Motor neuron (in vitro differentiated cells): ENCODE measurements at regions of chr6 and their contacts with region 1.

Region 1: GRCh38 chr6:46848684-46849360 is 55.6 kb downstream of the MEP1A start:
- ATAC-seq: peak; percentile 99 to 100 (median 100)
- H3K4me3 ChIP-seq: peak overlapping the region in 1 of 5 donors; percentile 3
- H3K27ac ChIP-seq: no peak overlapping the region
- H3K4me1 ChIP-seq: peaks cover 0 to 3% of the 10 kb centered on the region in 2 donors

Region 2: DNA sequence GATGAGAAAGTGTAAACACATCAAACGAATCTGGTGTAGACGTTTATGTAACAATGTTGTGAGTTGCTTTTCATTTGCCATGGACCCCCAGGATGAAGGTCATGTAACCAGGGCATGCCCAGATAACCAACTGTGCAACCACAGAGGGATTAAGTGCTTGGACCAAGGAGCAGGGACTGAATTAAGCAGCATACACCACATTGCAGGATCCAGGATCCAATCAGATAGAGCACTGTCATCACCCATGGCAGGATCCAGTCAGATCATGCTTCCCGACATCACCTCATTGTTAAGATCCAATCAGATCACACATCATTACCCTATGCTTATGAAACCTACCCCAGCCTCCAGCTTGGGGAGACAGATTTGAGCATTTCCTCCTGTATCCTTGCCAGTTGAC is 283.3 kb before region 1 on chr6:
- in situ Hi-C with region 1: no loop called
- ATAC-seq: no peak
- H3K4me3 ChIP-seq: no peak overlapping the region
- H3K27ac ChIP-seq: no peak overlapping the region
- H3K4me1 ChIP-seq: no peaks in the 10 kb centered on the region

Region 3: DNA sequence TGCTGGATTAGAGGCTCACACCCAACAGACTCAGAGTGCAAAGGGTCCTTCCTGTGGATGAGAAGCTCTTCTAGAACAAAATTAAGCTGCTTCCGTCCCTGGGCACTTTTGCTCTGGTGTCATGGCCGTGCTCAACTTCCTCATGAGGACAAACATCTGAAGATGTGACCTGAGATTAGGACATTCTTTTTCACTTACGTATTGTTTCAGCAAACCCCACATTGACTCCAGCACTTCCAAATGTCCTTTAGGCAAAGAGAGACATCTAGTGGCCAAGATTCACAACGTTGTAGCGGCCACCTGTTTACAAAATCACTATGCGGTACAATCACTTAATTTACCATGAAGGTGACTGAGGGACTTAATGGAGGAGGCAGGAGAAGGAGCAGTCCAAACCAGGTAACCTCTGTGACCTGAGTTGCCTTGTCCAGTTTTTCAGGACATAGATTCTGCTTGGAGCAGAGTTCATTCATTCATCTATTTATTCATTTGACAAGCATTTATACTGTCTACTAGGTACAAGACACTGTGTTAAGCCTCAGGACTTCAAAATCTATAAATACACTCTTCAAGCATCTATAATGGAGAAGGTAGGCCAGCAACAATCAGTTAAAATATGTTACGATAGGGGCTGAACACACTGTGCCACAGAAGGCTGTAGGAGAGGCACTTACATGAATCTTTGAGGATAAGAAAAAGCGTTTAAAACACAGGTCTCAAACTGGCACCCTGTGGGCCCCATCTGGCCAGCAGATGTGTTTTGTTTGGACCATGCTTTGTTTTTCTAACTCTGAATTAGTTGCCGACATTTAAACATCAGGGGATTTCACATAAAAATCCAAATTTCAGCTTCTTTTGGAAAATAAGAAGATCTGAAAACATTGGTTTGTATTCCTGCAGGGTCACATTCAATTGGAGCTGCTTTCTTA is 198.9 kb after region 1 on chr6:
- in situ Hi-C with region 1: loop called in 1 of 9 experiments (anchors 25 kb)
- ATAC-seq: peak; percentile 43 to 98 (median 76)
- H3K4me3 ChIP-seq: no peak overlapping the region
- H3K27ac ChIP-seq: no peak overlapping the region
- H3K4me1 ChIP-seq: no peaks in the 10 kb centered on the region

Region 4: DNA sequence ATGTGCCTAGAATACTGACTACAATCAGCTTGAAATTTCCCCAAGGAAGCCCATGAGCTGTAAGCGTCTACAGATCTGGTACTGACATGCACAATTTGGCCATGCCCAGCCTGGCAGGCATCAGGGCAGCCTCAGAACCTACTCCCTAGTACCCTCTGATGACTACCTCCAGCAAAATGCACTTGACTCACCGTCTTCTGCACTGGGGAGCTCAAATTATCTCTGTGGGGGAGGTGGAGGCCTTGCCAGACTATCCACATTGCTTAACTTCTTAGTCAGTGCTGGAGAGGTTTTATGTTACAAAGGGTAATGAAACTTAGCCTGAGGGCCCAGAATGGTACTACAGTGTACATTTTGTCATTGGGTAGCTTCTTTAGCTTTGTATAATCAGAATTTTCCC is 319.4 kb after region 1 on chr6:
- in situ Hi-C with region 1: no loop called
- ATAC-seq: peak in 3 of 8 experiments; percentile 47 to 99 (median 97)
- H3K4me3 ChIP-seq: no peak overlapping the region
- H3K27ac ChIP-seq: no peak overlapping the region
- H3K4me1 ChIP-seq: no peaks in the 10 kb centered on the region

Region 5: DNA sequence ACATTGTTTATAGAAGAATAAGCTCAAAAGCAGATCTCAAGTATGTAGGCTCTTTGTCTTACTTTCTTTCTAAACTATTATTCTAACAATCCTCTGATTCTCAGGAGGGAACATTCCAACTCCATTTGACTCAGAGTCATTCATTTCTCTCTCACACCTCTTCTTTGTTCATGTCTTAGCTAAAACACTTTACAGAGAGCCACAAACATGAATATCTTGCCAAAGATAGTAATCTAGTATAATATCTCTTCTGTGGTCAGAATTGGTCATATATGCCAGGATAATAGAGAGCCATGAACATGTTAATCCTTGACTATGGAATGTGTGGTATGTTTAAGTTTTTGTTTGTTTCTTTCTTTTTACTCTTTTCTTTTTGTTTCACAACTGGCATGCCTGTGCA is 1718.2 kb after region 1 on chr6:
- in situ Hi-C with region 1: no loop called
- ATAC-seq: peak in 2 of 8 experiments; percentile 11 to 50
- H3K4me3 ChIP-seq: no peak overlapping the region
- H3K27ac ChIP-seq: no peak overlapping the region
- H3K4me1 ChIP-seq: peaks cover 0 to 4% of the 10 kb centered on the region in 2 donors